HAP-1 (cell line): ENCODE measurements at regions of chr11 and their contacts with region 1.

Region 1: DNA sequence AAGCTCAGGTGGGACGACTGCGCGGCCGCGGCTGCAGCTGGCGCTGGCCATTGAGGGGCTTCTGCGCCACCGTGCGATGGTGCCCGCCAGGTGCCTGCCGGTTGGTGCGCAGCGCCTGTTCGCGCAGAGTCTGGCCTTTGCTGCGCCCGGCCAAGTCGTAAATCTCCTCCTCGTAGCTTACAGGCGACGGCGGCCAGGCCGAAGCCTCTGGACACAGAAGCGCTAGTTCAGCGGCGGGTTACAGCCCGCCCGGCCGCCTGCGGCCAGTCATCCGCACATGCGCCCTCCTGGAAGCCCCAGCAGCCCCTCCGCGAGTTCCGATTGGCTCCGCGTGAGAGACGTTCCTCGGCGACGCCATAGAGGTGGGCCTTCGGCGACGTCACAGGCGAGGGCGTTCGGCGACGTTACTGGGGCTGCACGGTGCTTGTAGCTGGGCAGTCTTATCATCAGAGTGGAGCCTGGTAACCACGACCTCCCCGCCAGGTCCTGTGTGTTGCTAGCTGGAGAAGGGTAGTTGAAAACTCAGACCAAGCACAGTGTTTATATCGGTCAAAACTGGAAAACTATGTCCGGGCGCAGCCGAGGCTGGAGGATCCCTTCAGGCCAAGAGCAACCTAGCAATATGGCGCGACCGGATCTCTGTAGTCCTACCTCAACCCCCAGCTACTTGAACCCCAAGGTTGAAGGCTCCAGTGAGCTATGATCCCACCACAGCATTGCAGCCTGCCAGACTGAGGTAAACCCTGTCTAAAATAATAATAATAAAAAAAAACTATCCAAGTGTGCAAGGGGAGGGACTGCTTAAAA is 265.7 kb downstream of the OR4C45 start:
- DNase-seq: no peak
- H3K4me3 ChIP-seq: no peak overlapping the region
- H3K4me1 ChIP-seq: no peaks in the 10 kb centered on the region
- H3K27me3 ChIP-seq: no peaks in the 10 kb centered on the region

Region 2: GRCh38 chr11:50075856-50076255 is 222.5 kb before region 1 on chr11:
- in situ Hi-C with region 1: loop called (anchors 25 kb)
- DNase-seq: no peak
- H3K4me3 ChIP-seq: no peak overlapping the region
- H3K4me1 ChIP-seq: no peaks in the 10 kb centered on the region
- H3K27me3 ChIP-seq: no peaks in the 10 kb centered on the region

Region 3: GRCh38 chr11:50214376-50214775 is 84.0 kb before region 1 on chr11:
- in situ Hi-C with region 1: loop called (anchors 25 kb)
- DNase-seq: no peak
- H3K4me3 ChIP-seq: no peak overlapping the region
- H3K4me1 ChIP-seq: no peaks in the 10 kb centered on the region
- H3K27me3 ChIP-seq: no peaks in the 10 kb centered on the region